CD4-positive, alpha-beta T cell (primary cell): ENCODE measurements at regions of chr12 and their contacts with region 1.

Region 1: DNA sequence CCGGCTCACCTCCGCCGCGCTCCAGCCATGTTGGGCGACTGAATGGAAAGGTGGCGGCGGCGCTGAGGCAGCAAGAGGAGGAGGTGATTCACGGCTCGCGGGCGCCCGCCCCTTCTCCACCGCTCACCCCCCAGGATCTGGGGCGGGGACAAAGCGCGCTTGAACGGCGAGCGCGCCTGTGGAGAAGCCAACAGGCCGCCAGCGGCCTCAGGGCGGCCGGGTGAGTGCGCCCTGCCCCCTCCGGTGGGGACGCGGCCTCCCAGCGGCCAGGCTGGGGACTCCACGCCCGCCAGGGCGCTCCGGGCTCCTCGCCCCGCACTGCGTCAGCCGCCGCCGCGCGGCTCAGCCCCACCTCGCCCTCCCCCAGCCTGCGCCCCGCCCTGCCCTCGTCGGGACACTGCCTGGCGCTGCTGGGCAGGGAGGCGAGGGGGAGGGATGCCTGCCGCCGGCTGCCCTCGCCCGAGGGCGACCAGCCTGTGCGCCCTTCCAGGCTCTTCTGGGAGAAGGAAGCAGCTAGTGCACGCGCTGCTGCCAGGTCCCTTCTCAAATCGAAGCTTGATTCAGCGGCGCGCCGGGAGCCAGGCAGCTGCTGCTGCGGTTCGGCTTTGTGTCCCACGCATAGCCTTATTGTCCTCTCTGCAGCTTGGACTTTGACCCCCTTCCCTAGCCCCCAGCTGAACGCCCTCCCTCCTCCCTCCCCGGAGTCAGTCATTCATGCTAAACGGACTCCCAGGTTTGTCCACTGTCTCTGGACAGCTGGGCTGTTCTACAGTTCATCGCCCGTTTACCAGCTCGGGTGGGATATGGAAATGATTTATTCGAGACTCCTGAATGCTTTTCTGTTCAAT is at the start of gene KIF21A:
- DNase-seq: peak; percentile 75 to 97 (median 84)
- ATAC-seq: peak; percentile 87
- H3K4me3 ChIP-seq: peak within 1 kb of the TSS; percentile 78
- H3K4me3 Mint-ChIP-seq: peak within 1 kb of the TSS; percentile 98
- H3K27ac ChIP-seq: peak within 1 kb of the TSS; percentile 18 to 57
- H3K27ac Mint-ChIP-seq: peak within 1 kb of the TSS; percentile 86
- H3K4me1 ChIP-seq: peaks cover 13% of the 10 kb centered on the region
- H3K4me1 Mint-ChIP-seq: peaks cover 18% of the 10 kb centered on the region
- H3K27me3 ChIP-seq: no peaks in the 10 kb centered on the region
- H3K27me3 Mint-ChIP-seq: peaks cover 21% of the 10 kb centered on the region
- CTCF ChIP-seq: peak; percentile 57
- total RNA-seq, gene KIF21A: 3.2 to 3.4 TPM

Region 2: GRCh38 chr12:39319187-39319586 is 124.1 kb before region 1 on chr12:
- CTCF ChIA-PET with region 1: no interaction called
- POLR2A ChIA-PET with region 1: no interaction called
- intact Hi-C with region 1: loop called in 1 of 2 experiments (anchors 5 kb)
- DNase-seq: no peak
- ATAC-seq: no peak
- H3K4me3 ChIP-seq: no peak overlapping the region
- H3K4me3 Mint-ChIP-seq: no peak overlapping the region
- H3K27ac ChIP-seq: no peak overlapping the region
- H3K27ac Mint-ChIP-seq: no peak overlapping the region
- H3K4me1 ChIP-seq: no peaks in the 10 kb centered on the region
- H3K4me1 Mint-ChIP-seq: no peaks in the 10 kb centered on the region
- H3K27me3 ChIP-seq: no peaks in the 10 kb centered on the region
- H3K27me3 Mint-ChIP-seq: no peaks in the 10 kb centered on the region
- CTCF ChIP-seq: no peak

Region 3: GRCh38 chr12:39392154-39392925 is 51.0 kb before region 1 on chr12:
- CTCF ChIA-PET with region 1: no interaction called
- POLR2A ChIA-PET with region 1: no interaction called
- intact Hi-C with region 1: no loop called
- DNase-seq: no peak
- ATAC-seq: no peak
- H3K4me3 ChIP-seq: no peak overlapping the region
- H3K4me3 Mint-ChIP-seq: no peak overlapping the region
- H3K27ac ChIP-seq: no peak overlapping the region
- H3K27ac Mint-ChIP-seq: no peak overlapping the region
- H3K4me1 ChIP-seq: no peaks in the 10 kb centered on the region
- H3K4me1 Mint-ChIP-seq: no peaks in the 10 kb centered on the region
- H3K27me3 ChIP-seq: no peaks in the 10 kb centered on the region
- H3K27me3 Mint-ChIP-seq: no peaks in the 10 kb centered on the region
- CTCF ChIP-seq: no peak

Region 4: DNA sequence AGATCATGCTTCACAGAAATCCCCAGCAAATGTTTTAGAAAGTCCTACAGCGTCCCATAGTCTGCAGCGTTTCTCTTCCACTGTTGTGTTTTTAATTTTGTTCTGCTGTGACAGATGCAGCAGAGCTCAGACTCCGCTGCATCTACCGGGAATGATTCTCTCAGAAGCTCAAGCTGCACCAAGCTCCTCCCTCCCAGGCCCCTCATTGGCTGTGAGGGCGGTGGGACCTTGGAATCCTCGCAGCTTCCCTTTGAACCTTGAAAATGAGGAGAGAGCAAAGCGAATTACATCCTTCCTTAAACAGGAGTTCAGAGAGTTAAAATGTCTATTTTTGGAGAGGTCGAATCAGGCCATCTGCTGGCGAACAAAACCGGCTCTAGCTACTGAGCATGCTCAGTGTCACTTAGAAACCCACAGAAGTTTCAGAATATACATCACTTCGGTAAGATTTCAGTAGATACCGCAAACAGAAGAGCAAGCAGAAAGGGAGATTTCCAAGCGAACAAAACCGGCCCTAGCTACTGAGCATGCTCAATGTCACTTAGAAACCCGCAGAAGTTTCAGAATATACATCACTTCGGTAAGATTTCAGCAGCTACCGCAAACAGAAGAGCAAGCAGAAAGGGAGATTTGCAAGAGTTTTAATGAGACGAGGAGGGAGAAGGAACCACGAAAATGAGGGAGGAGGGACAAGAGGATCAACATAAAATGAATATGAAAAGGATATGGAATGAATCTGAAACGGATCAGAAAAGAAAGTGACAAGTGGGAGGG is 176.5 kb after region 1 on chr12 and contains the start of gene ABCD2:
- CTCF ChIA-PET with region 1: no interaction called
- POLR2A ChIA-PET with region 1: interaction called, 9 read pairs
- intact Hi-C with region 1: loop called (anchors 5 to 10 kb)
- DNase-seq: peak; percentile 45 to 94 (median 61)
- ATAC-seq: peak; percentile 84
- H3K4me3 ChIP-seq: peak within 1 kb of the TSS; percentile 68
- H3K4me3 Mint-ChIP-seq: no peak within 1 kb of the TSS
- H3K27ac ChIP-seq: peak within 1 kb of the TSS; percentile 74 to 89
- H3K27ac Mint-ChIP-seq: no peak within 1 kb of the TSS
- H3K4me1 ChIP-seq: peaks cover 22% of the 10 kb centered on the region
- H3K4me1 Mint-ChIP-seq: peaks cover 35% of the 10 kb centered on the region
- H3K27me3 ChIP-seq: no peaks in the 10 kb centered on the region
- H3K27me3 Mint-ChIP-seq: no peaks in the 10 kb centered on the region
- CTCF ChIP-seq: no peak
- total RNA-seq, gene ABCD2: 1.6 to 2.2 TPM

Region 5: DNA sequence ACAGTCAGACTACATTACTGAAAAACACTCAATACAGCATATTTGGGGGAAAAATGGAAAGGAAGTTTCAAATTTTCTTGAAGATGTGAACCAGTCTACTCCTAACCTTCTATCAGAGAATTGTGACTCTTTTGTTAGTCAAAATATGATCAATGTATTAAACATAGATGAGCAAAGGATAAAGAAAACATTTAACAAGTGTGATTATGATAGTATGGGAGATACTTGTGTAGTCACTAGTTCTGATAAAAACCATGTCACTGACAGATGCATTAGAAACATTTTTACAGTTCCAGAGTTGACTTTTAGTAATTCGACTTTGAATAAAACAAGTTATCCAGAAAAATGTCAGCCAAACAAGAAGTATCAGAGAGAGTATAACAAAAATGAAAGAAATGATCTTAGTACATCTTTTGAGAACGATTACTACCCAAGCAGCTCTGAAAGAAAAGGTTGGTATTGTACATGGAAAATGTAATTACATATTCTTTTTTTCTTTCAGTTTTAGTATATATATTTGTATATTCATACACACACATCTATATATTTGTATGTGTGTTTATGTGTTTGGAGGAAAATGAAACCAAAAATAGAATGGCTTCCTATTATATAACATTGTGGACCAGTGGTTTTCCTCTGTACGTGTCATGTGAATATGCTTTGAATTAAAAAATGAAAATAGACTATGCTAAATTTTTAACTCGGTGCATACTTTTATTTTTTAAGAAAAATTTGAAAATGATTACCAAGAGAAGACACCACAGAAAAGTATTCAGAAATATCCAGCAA is 239.6 kb after region 1 on chr12:
- CTCF ChIA-PET with region 1: no interaction called
- POLR2A ChIA-PET with region 1: no interaction called
- intact Hi-C with region 1: loop called in 1 of 2 experiments (anchors 10 kb)
- DNase-seq: peak in 3 of 14 experiments; percentile 59 to 84 (median 65)
- ATAC-seq: peak; percentile 71
- H3K4me3 ChIP-seq: peak overlapping the region; percentile 32
- H3K4me3 Mint-ChIP-seq: peak overlapping the region; percentile 88
- H3K27ac ChIP-seq: peak overlapping the region; percentile 46 to 85
- H3K27ac Mint-ChIP-seq: peak overlapping the region; percentile 97
- H3K4me1 ChIP-seq: peaks cover 18% of the 10 kb centered on the region
- H3K4me1 Mint-ChIP-seq: peaks cover 34% of the 10 kb centered on the region
- H3K27me3 ChIP-seq: no peaks in the 10 kb centered on the region
- H3K27me3 Mint-ChIP-seq: no peaks in the 10 kb centered on the region
- CTCF ChIP-seq: no peak

Region 6: GRCh38 chr12:39692258-39692853 is 249.1 kb after region 1 on chr12:
- CTCF ChIA-PET with region 1: no interaction called
- POLR2A ChIA-PET with region 1: no interaction called
- intact Hi-C with region 1: loop called (anchors 5 to 10 kb)
- DNase-seq: peak in 3 of 14 experiments; percentile 32 to 62 (median 33)
- ATAC-seq: peak; percentile 37
- H3K4me3 ChIP-seq: no peak overlapping the region
- H3K4me3 Mint-ChIP-seq: no peak overlapping the region
- H3K27ac ChIP-seq: no peak overlapping the region
- H3K27ac Mint-ChIP-seq: no peak overlapping the region
- H3K4me1 ChIP-seq: no peaks in the 10 kb centered on the region
- H3K4me1 Mint-ChIP-seq: peaks cover 4% of the 10 kb centered on the region
- H3K27me3 ChIP-seq: no peaks in the 10 kb centered on the region
- H3K27me3 Mint-ChIP-seq: peaks cover 11% of the 10 kb centered on the region
- CTCF ChIP-seq: peak; percentile 76

Region 7: DNA sequence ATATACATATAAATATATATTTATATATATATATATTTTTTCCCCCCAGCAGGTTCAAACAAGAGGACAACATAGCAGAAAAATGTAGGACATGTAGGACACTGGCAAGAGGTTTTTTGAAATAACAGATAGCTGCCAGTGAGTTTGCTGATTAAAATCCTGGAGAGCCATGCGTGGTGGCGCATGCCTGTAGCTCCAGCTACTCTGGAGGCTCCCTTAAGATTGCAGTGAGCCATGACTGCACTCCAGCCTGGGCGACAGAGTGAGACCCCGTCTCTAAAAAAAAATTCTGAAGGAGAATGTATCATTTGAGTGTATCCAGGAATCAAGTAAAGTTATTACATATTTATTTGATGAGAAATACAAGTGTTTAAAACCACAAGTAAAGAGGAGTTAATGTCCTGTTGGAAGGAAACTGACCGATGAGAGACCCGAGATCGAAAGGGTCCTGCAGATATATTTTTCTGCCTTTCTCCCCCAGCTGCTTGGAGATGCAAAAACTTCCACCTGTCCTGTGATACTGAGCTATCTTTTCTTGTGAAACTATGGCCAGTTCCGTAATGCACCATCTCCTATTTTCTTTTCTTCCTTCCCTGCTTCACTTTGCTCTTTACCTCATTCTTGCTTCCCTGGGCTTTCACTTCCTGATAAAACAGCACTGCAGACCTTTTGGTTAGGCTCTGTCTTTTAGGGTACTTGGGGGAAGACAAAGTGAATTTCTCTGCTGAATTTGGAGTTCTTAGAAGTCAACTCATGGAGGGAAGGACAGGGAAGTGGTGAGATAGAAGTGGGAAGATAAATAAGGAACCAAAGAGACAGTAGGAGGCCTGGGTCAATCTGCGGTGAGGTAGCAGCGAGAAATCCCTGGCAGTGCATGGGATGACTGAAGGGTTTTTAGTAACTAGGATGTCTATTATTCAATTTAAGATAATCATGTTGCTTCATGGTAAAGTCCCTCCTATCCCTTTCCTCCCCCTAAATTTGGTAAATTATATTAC is 703.8 kb after region 1 on chr12:
- CTCF ChIA-PET with region 1: no interaction called
- POLR2A ChIA-PET with region 1: no interaction called
- intact Hi-C with region 1: loop called in 1 of 2 experiments (anchors 10 kb)
- DNase-seq: peak in 1 of 14 experiments; percentile 32
- ATAC-seq: peak; percentile 41
- H3K4me3 ChIP-seq: no peak overlapping the region
- H3K4me3 Mint-ChIP-seq: no peak overlapping the region
- H3K27ac ChIP-seq: no peak overlapping the region
- H3K27ac Mint-ChIP-seq: no peak overlapping the region
- H3K4me1 ChIP-seq: no peaks in the 10 kb centered on the region
- H3K4me1 Mint-ChIP-seq: no peaks in the 10 kb centered on the region
- H3K27me3 ChIP-seq: no peaks in the 10 kb centered on the region
- H3K27me3 Mint-ChIP-seq: peaks cover 5% of the 10 kb centered on the region
- CTCF ChIP-seq: no peak